ENCODE measurements at regions of chr7 and their contacts with region 1.

Region 1: DNA sequence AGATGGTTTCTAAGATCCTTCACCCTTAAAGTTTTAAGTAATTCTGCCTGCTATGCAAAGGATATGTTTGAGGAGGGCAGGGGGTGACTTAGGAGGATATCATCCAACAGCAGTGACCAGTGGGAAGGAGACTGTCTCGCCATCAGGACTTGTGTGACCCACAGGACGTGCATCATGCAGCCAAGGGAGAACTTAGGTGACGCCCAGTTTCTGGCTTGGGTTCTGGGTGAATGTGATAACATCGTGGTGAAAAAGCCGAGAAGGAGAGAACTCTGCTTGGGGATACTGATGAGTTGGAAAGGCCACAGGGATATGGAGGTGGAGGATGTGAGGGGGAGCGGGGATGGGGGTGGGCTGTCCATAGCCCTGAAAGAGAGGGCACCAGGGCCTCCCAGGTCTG is 3.8 kb downstream of the WIPI2 start:
- DNase-seq: no peak
- ATAC-seq: no peak
- H3K4me3 ChIP-seq: no peak overlapping the region
- H3K4me3 Mint-ChIP-seq: no peak overlapping the region
- H3K27ac ChIP-seq: no peak overlapping the region
- H3K27ac Mint-ChIP-seq: no peak overlapping the region
- H3K4me1 ChIP-seq: peaks cover 13% of the 10 kb centered on the region
- H3K4me1 Mint-ChIP-seq: peaks cover 41% of the 10 kb centered on the region
- H3K27me3 ChIP-seq: no peaks in the 10 kb centered on the region
- H3K27me3 Mint-ChIP-seq: no peaks in the 10 kb centered on the region
- CTCF ChIP-seq: no peak

Region 2: DNA sequence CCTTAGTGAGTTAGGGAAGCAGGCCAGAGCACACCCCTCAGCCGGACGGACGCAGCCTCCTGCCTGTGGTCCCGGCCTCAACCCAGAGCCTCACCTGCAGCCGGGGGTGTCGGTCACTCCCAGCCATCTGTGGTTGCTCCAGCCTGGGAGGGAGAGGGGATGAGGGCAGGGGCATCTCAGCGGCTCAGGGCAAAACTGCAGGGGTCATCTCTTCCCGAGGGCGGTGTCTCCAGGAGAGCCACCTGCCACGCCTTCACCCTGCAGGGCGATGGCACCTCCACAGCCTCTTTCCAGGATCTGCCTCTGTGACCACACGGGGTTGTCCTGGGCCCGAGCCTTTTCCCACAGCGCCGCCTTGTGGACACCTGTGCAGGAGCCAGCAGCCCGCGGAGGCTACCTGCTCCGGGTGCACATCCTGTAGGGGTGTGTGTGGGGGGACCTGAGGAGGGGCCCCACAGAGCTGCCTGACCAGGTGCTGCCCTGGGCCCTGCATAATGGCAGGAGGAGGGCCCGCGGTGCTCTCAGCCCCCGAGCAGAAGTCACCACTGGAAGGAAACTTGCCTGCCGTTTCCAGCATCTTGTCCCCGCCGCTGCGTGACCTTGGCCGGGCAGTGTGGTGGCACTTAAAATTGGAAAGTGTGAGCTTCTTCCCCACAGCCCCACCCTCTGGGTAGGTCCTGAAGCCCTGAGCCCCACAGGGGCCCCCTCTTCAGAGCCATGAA is 440.0 kb before region 1 on chr7:
- CTCF ChIA-PET with region 1: no interaction called
- POLR2A ChIA-PET with region 1: no interaction called
- intact Hi-C with region 1: no loop called
- DNase-seq: peak; percentile 69 to 95 (median 86)
- ATAC-seq: peak; percentile 98
- H3K4me3 ChIP-seq: no peak overlapping the region
- H3K4me3 Mint-ChIP-seq: no peak overlapping the region
- H3K27ac ChIP-seq: no peak overlapping the region
- H3K27ac Mint-ChIP-seq: no peak overlapping the region
- H3K4me1 ChIP-seq: peaks cover 19% of the 10 kb centered on the region
- H3K4me1 Mint-ChIP-seq: peaks cover 17% of the 10 kb centered on the region
- H3K27me3 ChIP-seq: no peaks in the 10 kb centered on the region
- H3K27me3 Mint-ChIP-seq: no peaks in the 10 kb centered on the region
- CTCF ChIP-seq: peak; percentile 83

Region 3: DNA sequence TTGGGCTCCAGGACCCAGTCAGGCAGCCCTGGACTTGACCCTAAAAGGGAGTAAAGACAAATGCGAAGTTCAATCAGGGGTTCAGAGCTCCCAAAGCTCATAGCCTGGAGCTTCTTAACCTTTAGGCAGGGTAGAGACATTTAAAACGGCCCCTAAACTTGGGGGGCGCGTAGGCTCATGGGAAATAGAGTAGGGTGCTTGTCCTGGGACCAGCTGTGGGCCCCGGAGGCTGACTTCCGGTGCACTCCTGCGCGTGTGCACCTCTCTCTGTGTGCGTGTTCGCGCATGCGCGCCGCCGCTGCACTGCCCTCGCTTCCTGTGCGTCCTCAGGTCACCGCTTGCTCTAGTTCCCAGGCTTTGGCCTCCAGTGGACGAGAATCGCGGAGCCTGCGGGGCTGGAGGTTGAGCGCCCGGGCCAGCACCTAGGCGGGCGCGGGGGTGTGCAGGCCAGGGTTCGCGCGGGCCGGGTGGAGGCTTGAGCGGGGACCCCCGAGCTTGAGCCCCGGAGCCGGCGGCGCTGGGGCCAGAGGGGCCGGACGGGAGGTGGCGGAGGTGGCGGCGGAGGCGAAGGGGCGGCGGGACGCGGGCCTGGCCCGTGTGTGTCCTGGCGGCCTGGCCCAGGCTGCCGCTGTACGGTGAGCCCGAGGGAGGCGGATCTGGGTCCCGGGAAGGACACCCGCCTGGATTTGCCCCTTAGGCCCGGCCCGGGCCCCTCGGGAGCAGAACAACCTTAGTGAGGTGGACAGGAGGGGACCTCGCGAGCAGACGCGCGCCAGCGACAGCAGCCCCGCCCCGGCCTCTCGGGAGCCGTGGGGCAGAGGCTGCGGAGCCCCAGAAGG is 148.1 kb before region 1 on chr7 and contains the start of gene RBAK:
- CTCF ChIA-PET with region 1: no interaction called
- POLR2A ChIA-PET with region 1: no interaction called
- intact Hi-C with region 1: loop called in 1 of 2 experiments (anchors 2 kb)
- DNase-seq: peak; percentile 75 to 97 (median 90)
- ATAC-seq: peak; percentile 99
- H3K4me3 ChIP-seq: peak within 1 kb of the TSS; percentile 77 to 95
- H3K4me3 Mint-ChIP-seq: peak within 1 kb of the TSS; percentile 88
- H3K27ac ChIP-seq: peak within 1 kb of the TSS; percentile 77 to 79
- H3K27ac Mint-ChIP-seq: peak within 1 kb of the TSS; percentile 93
- H3K4me1 ChIP-seq: peaks cover 11% of the 10 kb centered on the region
- H3K4me1 Mint-ChIP-seq: peaks cover 46% of the 10 kb centered on the region
- H3K27me3 ChIP-seq: no peaks in the 10 kb centered on the region
- H3K27me3 Mint-ChIP-seq: no peaks in the 10 kb centered on the region
- CTCF ChIP-seq: no peak
- total RNA-seq, gene RBAK: 12.9 to 13.6 TPM

Measured in CD8-positive, alpha-beta T cell (primary cell).